H1 (cell line): ENCODE measurements at regions of chr2 and their contacts with region 1.

Region 1: GRCh38 chr2:218466016-218466521 is 47.1 kb downstream of the VIL1 start:
- DNase-seq: no peak
- H3K4me3 ChIP-seq: no peak overlapping the region
- H3K27ac ChIP-seq: no peak overlapping the region
- H3K4me1 ChIP-seq: no peaks in the 10 kb centered on the region
- H3K27me3 ChIP-seq: no peaks in the 10 kb centered on the region
- CTCF ChIP-seq: peak in 1 of 3 experiments; percentile 33; a peak in 1 of 4 replicates
- EP300 ChIP-seq: no peak
- POLR2A ChIP-seq: no peak
- RAD21 ChIP-seq: peak in 1 of 2 experiments; percentile 28; a peak in 3 of 4 replicates

Region 2: GRCh38 chr2:218406209-218406948 is 59.7 kb before region 1 on chr2:
- CTCF ChIA-PET with region 1: interaction called, 12 read pairs
- POLR2A ChIA-PET with region 1: no interaction called
- DNase-seq: peak; percentile 85 to 98
- H3K4me3 ChIP-seq: peak overlapping the region; percentile 45 to 75 (median 62)
- H3K27ac ChIP-seq: peak overlapping the region; percentile 82; the same call in 1 of the 2 replicates
- H3K4me1 ChIP-seq: peaks cover 12 to 25% (median 19%) of the 10 kb centered on the region in 4 experiments
- H3K27me3 ChIP-seq: no peaks in the 10 kb centered on the region
- CTCF ChIP-seq: peak in 2 of 3 experiments; percentile 73 to 78; a peak in 3 of 4 replicates
- EP300 ChIP-seq: no peak
- POLR2A ChIP-seq: no peak
- RAD21 ChIP-seq: peak; percentile 80

Region 3: GRCh38 chr2:218442333-218442732 is 23.7 kb before region 1 on chr2:
- CTCF ChIA-PET with region 1: interaction called, 10 read pairs
- POLR2A ChIA-PET with region 1: no interaction called
- DNase-seq: no peak
- H3K4me3 ChIP-seq: no peak overlapping the region
- H3K27ac ChIP-seq: no peak overlapping the region
- H3K4me1 ChIP-seq: no peaks in the 10 kb centered on the region
- H3K27me3 ChIP-seq: no peaks in the 10 kb centered on the region
- CTCF ChIP-seq: no peak
- EP300 ChIP-seq: no peak
- POLR2A ChIP-seq: no peak
- RAD21 ChIP-seq: no peak

Region 4: DNA sequence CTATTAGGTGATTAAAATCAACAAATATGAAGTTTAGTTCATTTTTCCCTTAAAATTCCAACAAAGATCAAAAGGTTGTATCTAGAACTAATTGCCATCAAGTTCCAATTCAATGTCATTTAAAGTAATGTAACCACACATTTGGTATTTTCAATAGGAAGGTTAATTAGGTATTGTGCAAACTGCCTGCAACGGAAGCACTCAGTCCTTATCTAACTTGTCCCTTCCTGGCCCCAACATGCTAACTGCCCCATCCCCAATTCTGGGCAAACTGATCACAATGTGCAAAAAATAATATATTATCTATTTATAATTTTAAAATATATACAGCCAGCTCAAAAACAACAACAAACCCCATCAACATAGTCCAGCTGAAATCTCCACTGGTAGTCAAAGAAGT is 14.0 kb before region 1 on chr2:
- CTCF ChIA-PET with region 1: interaction called, 19 read pairs
- POLR2A ChIA-PET with region 1: interaction called, 4 read pairs
- DNase-seq: no peak
- H3K4me3 ChIP-seq: no peak overlapping the region
- H3K27ac ChIP-seq: no peak overlapping the region
- H3K4me1 ChIP-seq: no peaks in the 10 kb centered on the region
- H3K27me3 ChIP-seq: no peaks in the 10 kb centered on the region
- CTCF ChIP-seq: no peak
- EP300 ChIP-seq: no peak
- POLR2A ChIP-seq: no peak
- RAD21 ChIP-seq: no peak